AG04449 (cell line): ENCODE measurements at regions of chr2 and their contacts with region 1.

Region 1: DNA sequence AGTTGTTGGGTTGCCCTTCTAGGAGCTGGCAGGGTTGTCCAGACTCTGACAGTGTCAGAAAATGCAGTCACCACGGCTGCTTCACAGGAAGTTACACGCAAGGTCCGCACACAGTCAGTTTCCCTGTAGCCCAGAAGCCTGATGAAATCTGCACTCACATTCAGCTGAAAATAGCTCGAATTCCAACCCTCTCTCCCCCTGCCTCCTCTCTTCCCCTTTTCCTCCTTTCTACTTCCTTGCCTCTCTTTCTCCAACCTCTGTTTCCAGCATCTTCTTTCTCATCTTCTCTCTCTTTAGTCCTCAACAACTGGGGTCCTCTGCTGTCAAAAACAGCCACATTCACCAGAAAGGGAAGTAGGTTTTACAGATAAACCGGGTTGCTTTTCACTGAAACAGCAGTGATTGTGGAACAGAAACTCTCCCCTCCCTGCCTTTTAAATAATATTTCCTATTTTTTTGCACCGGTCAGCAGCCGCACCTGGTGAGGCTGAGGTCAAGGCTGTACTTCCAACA is 69.3 kb downstream of the BCL11A start:
- DNase-seq: peak; percentile 64
- H3K4me3 ChIP-seq: peak overlapping the region; percentile 41
- CTCF ChIP-seq: no peak

Region 2: GRCh38 chr2:59896499-59897245 is 587.5 kb before region 1 on chr2:
- CTCF ChIA-PET with region 1: no interaction called
- POLR2A ChIA-PET with region 1: no interaction called
- DNase-seq: no peak
- H3K4me3 ChIP-seq: no peak overlapping the region
- CTCF ChIP-seq: no peak

Region 3: GRCh38 chr2:60515721-60516226 is 31.6 kb after region 1 on chr2:
- CTCF ChIA-PET with region 1: interaction called, 3 read pairs
- POLR2A ChIA-PET with region 1: interaction called, 15 read pairs
- DNase-seq: peak; percentile 94
- H3K4me3 ChIP-seq: peak overlapping the region; percentile 51
- CTCF ChIP-seq: peak; percentile 39